A673 (cell line): ENCODE measurements at regions of chr5 and their contacts with region 1.

Region 1: DNA sequence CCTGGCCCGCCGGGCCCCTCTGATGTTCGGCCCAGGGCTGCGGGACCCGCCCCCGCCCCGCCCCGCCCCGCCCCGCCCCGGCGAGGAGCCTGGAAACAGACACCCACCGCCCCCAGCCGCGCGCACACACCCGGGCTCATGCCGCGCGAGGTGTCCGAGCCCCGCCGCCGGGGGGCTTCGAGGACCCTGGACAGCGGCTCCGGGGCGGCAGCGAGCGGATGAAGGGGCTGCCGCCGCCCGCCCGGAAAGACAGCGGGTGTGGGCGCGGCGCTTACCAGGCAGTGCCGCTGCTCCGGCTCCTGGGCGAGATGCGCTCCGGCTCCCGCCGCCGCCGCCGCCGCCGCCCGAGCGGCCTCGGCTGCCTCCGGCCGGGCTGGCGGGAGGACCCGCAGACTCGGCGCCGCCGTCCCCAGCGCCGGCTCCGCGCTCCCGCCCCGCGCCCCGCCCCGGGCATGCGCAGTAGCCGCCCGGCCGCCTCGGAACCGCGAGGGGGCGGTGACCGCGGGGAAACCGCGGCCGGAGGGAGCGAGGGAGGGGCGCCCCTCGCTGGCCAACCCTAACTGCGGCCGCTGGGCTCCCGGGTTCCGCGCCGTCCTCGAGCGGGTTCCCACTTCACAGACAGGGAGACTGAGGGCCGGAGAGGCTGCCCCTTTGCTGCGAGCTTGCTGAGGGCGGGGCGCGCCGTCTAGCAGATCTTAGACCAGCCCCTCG is at the start of gene GPRIN1:
- DNase-seq: peak; percentile 71
- H3K4me3 ChIP-seq: peak within 1 kb of the TSS; percentile 53
- H3K27ac ChIP-seq: peak within 1 kb of the TSS; percentile 71
- H3K4me1 ChIP-seq: peaks cover 9% of the 10 kb centered on the region
- H3K27me3 ChIP-seq: no peaks in the 10 kb centered on the region
- CTCF ChIP-seq: peak; percentile 24; the same call in 1 of the 2 replicates
- total RNA-seq, gene GPRIN1: 16.7 and 18.9 TPM in 2 replicates

Region 2: GRCh38 chr5:177162379-177162778 is 552.5 kb after region 1 on chr5:
- CTCF ChIA-PET with region 1: no interaction called
- POLR2A ChIA-PET with region 1: interaction called, 11 read pairs
- intact Hi-C with region 1: no loop called
- DNase-seq: no peak
- H3K4me3 ChIP-seq: no peak overlapping the region
- H3K27ac ChIP-seq: no peak overlapping the region
- H3K4me1 ChIP-seq: no peaks in the 10 kb centered on the region
- H3K27me3 ChIP-seq: no peaks in the 10 kb centered on the region
- CTCF ChIP-seq: no peak